ENCODE measurements at regions of chr17 and their contacts with region 1.

Region 1: DNA sequence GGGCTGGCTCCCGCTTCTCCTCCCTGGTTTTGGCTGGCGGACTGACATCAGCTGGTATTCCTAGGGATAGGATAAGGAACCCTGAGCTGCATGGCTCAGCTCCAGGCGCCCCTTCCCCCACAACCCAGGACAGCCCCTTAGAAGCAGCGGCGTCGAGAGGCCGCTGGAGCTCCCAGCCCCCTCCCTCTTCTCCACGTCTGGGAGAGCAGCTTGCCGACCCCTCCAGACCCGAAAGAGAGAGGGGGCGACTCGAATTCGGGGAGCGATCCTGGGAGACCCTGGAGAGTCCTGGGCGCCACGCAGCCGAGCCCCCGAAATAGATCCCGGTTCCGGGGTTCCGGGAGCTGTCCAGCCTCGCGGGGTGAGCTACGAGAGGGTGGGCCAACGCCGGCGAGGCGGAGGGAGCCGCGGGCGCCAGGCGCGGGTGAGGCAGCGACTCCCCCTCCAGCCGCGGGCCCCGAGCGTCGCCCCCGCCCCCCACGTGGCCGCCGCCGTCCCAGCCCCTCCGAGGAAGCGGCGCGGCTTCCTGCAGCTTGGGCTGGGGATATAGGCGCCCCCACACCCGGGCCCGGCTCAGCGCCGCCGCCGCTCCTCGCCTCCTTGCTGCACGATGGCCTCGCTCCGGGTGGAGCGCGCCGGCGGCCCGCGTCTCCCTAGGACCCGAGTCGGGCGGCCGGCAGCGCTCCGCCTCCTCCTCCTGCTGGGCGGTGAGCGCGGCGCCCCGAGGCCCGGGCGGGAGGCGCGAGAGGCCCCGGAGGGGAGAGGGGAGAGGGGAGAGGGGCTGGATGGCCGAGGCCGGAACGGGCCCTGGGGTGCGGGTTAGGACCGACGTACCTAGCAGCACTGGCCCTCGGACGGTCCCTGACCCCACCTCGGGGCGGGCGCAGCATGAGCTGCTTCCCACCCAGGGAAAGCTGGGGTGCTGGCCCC is at the start of gene RAMP2:
- DNase-seq: no peak
- H3K4me3 ChIP-seq: peak within 1 kb of the TSS; percentile 25 to 33 (median 31)
- H3K27ac ChIP-seq: no peak within 1 kb of the TSS
- H3K4me1 ChIP-seq: peaks cover 10% of the 10 kb centered on the region
- H3K27me3 ChIP-seq: peaks cover 17% of the 10 kb centered on the region
- CTCF ChIP-seq: no peak
- total RNA-seq, gene RAMP2: not detected

Region 2: DNA sequence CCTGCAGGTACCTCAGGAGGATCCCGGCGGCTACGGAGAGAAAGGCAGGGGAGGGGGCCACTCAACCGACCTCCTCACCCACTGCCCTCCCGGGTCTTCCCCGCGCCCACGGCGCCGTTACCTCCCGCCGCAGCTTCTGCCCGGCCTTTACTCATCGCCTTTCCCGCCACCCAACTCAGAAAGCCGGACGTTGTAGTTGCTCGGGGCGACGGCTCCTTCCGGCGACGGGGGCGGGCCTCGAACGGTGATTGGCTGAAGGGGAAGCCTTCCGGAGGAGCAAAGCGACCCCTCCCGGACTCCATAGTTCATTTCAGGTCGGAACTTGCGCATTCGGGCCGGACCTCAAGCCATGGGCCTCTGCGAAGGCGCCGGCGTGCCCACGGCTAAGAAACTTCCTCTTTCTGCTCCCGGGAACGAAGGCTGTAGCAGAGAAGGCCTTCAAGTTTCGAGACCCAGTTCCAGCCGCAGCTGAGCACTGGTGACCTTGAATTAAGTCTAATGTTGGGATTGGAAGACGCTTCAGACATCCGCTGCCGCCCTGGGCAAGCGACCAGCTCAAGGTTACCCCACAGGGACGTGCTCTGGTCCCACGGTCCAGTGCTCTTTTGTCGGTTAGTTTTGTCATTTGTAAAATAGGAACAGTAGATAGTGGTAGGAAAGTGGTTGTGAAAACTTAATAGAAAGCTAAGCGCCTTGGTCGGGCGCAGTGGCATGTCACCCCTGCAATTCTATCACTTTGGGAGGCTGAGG is 183.2 kb before region 1 on chr17 and contains the start of gene PSMC3IP:
- CTCF ChIA-PET with region 1: interaction called, 18 read pairs
- dilution Hi-C with region 1: no loop called
- in situ Hi-C with region 1: no loop called
- intact Hi-C with region 1: loop called (anchors 1 kb)
- DNase-seq: peak; percentile 94
- H3K4me3 ChIP-seq: peak within 1 kb of the TSS; percentile 67 to 78 (median 73)
- H3K27ac ChIP-seq: peak within 1 kb of the TSS; percentile 58
- H3K4me1 ChIP-seq: peaks cover 16% of the 10 kb centered on the region
- H3K27me3 ChIP-seq: no peaks in the 10 kb centered on the region
- CTCF ChIP-seq: peak; percentile 9 to 54
- total RNA-seq, gene PSMC3IP: 2.2 to 25.2 TPM

Region 3: GRCh38 chr17:42744806-42745617 is 15.9 kb before region 1 on chr17 and contains the start of gene EZH1:
- CTCF ChIA-PET with region 1: no interaction called
- dilution Hi-C with region 1: no loop called
- in situ Hi-C with region 1: no loop called
- intact Hi-C with region 1: loop called (anchors 1 kb)
- DNase-seq: peak; percentile 88
- H3K4me3 ChIP-seq: peak within 1 kb of the TSS; percentile 71 to 93 (median 77)
- H3K27ac ChIP-seq: peak within 1 kb of the TSS; percentile 60
- H3K4me1 ChIP-seq: peaks cover 13% of the 10 kb centered on the region
- H3K27me3 ChIP-seq: no peaks in the 10 kb centered on the region
- CTCF ChIP-seq: no peak
- total RNA-seq, gene EZH1: 17.8 to 21.3 TPM